ENCODE measurements at regions of chr15 and their contacts with region 1.

Region 1: DNA sequence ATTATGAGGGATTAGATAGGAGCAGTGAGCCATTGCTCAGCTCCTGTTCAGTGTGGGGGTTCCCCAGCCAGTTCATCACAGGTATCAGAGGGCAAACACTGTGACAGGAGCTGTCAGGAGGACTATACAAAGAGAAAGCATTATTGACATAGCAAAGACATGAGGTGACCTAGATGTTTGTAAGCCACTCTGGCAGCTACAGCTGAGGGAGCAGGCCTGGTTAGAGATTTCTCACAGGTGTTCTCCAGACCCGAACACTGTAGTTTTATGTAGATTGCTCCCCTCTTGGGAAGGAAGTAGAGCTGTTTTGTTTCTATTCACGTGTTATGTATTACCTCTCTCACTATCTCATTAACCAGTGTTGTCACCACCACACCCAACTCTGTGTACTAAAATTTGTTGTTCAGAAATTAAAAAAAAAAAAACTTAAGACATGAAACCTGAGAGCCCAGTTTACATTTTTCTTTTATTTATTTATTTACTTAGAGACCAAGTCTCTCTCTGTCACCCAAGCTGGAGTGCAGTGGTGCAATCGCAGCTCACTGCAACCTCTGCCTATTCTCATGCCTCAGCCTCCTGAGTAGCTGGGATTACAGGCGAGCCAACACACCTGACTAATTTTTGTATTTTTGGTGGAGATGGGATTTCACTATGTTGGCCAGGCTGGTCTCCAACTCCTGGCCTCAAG is 123.7 kb downstream of the RBPMS2 start:
- DNase-seq: no peak
- ATAC-seq: peak in 1 of 8 donors; percentile 25
- H3K4me3 ChIP-seq: no peak overlapping the region
- H3K27ac ChIP-seq: no peak overlapping the region
- H3K4me1 ChIP-seq: peaks cover 0 to 11% (median 0%) of the 10 kb centered on the region in 9 donors
- H3K27me3 ChIP-seq: no peaks in the 10 kb centered on the region
- CTCF ChIP-seq: no peak

Region 2: DNA sequence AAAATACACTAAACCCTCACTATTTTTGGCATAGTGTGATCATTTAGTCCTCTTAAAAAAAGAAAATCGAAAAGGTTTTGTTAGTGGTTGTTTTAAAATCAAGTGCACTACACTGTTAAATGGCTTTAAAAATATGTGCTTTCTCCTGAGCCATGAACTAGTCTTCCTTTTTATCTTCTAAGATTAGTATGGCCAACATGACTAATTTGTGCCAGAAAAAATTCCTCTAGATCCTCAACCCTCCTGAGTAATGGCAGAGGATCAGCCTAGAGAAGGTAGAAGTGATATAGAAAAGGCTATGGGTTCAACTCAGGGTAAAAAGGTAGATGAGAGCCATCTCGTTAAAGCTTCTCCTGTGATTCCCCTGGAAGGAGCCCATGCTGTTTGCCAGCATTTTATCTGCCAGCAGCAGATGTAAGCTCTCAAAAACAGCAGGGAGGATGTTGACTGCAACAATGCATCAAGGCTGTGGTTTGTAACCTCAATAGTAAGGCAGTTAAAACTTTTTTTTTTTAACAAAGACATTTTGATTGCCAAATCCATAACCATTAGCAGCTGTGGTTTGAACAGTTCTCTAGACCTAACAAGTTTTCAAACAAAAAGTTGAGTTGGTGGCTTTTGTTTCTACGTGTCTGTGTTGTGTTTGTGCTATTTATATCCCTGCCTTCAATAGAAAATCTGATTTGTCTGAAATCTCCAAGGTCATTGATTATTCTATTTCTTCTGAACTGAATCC is 221.5 kb before region 1 on chr15:
- intact Hi-C with region 1: loop called in 4 of 10 experiments (anchors 5 to 10 kb)
- DNase-seq: peak in 1 of 2 donors; percentile 30
- ATAC-seq: peak in 7 of 8 donors; percentile 58 to 79 (median 71)
- H3K4me3 ChIP-seq: no peak overlapping the region
- H3K27ac ChIP-seq: peak overlapping the region in 5 of 10 donors; percentile 6 to 66 (median 34)
- H3K4me1 ChIP-seq: peaks cover 6 to 26% (median 16%) of the 10 kb centered on the region in 9 donors
- H3K27me3 ChIP-seq: no peaks in the 10 kb centered on the region
- CTCF ChIP-seq: no peak

Region 3: GRCh38 chr15:64455961-64456371 is 195.8 kb before region 1 on chr15:
- intact Hi-C with region 1: loop called in 1 of 10 experiments (anchors 10 kb)
- DNase-seq: peak in 1 of 2 donors; percentile 47
- ATAC-seq: no peak
- H3K4me3 ChIP-seq: no peak overlapping the region
- H3K27ac ChIP-seq: peak overlapping the region in 1 of 10 donors; percentile 63
- H3K4me1 ChIP-seq: peaks cover 0 to 43% (median 9%) of the 10 kb centered on the region in 9 donors
- H3K27me3 ChIP-seq: no peaks in the 10 kb centered on the region
- CTCF ChIP-seq: no peak

Region 4: GRCh38 chr15:64825431-64826294 is 173.9 kb after region 1 on chr15 and contains the start of gene PIF1:
- intact Hi-C with region 1: no loop called
- DNase-seq: peak; percentile 72 to 96
- ATAC-seq: peak; percentile 95 to 98 (median 98)
- H3K4me3 ChIP-seq: peak within 1 kb of the TSS; percentile 23 to 59 (median 52)
- H3K27ac ChIP-seq: peak within 1 kb of the TSS in 9 of 10 donors; percentile 43 to 87 (median 75)
- H3K4me1 ChIP-seq: peaks cover 10 to 31% (median 19%) of the 10 kb centered on the region in 9 donors
- H3K27me3 ChIP-seq: peaks cover 0 to 11% (median 0%) of the 10 kb centered on the region in 7 donors
- CTCF ChIP-seq: peak in 2 of 9 donors; percentile 16 to 21
- total RNA-seq, gene PIF1: 0.22 to 2.9 (median 0.45) TPM

Measured in heart right ventricle (tissue), 16 donors.